Ascending aorta (tissue), 2 donors: ENCODE measurements at regions of chr11 and their contacts with region 1.

Region 1: DNA sequence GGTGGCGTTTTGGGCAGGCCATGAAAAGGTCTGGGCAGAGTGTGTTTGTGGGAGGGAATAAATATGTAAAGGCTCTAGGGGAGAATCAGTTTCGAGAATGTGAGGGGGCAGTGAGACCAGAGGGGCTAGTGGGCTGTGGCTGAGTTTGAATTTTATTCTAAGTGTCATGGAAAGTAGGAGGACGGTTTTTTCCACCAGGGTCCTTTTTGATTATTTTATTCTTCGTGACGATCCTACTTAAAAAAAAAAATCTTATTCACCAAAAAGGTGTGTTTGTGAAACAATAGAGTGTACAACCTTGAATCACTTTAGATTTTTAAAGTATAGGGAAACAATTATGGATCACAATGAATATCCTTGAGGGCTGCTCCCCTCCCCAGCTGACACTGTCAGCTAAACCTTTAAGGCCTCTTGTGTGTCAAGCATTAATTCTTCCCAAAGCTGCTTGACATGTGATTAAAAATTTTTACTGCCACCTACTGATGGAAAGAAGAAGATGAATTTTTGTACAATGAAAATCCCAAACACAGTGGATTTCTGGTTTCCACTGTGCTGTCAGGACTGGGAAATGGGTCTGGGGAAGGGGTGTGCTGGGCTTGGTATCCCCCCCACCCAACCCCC is 107.5 kb upstream of the OR4B1 start:
- DNase-seq: no peak
- H3K4me3 ChIP-seq: peak overlapping the region in 1 of 2 donors; percentile 44
- H3K27ac ChIP-seq: no peak overlapping the region
- H3K4me1 ChIP-seq: peaks cover 4 to 9% of the 10 kb centered on the region in 2 donors
- H3K27me3 ChIP-seq: no peaks in the 10 kb centered on the region
- CTCF ChIP-seq: peak; percentile 27 to 50 (median 48)

Region 2: DNA sequence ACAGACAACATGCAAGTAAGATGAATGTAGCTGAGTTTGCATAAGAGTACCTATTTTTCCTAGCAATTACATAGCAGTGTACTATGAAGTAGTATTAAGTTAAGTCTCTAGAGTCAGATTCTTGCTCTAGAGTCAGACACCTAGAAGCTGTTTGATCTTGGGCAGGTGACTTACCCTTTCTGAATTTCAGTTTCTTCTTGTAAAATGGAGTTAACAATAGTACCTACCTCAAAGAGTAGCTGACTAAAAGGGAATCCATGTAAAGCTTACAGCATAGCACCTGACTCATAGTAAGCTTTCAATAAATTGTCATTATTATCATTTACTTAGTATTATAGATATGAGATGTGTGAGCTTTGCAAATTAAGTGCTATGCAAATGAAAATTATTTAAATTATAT is 176.6 kb before region 1 on chr11:
- intact Hi-C with region 1: loop called (anchors 1 kb)
- DNase-seq: no peak
- H3K4me3 ChIP-seq: no peak overlapping the region
- H3K27ac ChIP-seq: peak overlapping the region in 1 of 2 donors; percentile 56
- H3K4me1 ChIP-seq: no peaks in the 10 kb centered on the region
- H3K27me3 ChIP-seq: no peaks in the 10 kb centered on the region
- CTCF ChIP-seq: no peak

Region 3: DNA sequence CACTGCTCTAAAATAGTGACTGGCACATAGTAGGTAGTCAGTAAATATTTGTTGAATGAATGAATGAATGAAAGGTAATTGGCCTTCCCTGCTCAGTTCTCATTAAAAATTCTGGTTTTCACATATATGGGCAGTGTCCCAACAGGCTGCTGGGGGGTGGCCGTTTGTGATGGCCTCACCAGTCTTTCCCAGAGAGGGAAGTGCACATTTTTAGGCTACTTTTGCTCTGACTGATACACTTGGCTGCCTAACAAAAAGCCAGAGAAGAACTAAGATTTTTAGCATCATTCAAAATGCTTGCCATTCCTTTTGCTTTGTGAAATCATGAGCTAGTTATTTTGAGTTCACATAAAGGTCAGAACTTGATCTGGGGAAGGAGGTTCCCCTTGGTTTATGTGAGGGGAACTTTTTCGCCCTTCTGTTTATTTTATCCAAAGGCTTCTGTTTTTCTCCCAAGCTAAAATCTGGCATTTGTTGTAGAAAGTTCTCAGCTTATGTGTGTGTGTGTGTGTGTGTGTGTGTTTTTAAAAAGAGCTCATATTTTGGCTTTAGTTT is 45.7 kb before region 1 on chr11:
- intact Hi-C with region 1: loop called (anchors 5 kb)
- DNase-seq: peak in 1 of 2 donors; percentile 69
- H3K4me3 ChIP-seq: no peak overlapping the region
- H3K27ac ChIP-seq: peak overlapping the region; percentile 67 to 71
- H3K4me1 ChIP-seq: peaks cover 10 to 20% of the 10 kb centered on the region in 2 donors
- H3K27me3 ChIP-seq: no peaks in the 10 kb centered on the region
- CTCF ChIP-seq: no peak

Region 4: DNA sequence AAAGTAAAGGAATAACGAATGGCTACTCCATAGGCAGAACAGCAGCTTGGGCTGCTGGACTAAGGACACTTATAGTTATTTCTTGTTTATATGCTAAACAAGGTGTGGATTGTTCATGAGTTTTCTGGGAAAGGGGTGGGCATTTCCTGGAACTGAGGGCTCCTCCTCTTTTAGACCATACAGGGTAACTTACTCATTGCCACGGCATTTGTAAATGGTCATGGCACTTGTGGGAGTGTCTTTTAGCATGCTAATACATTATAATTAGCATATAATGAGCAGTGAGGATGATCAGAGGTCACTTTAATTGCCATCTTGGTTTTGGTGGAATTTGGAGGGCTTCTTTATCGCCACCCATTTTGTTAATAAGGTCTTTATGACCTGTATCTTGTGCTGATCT is 161.5 kb after region 1 on chr11:
- intact Hi-C with region 1: no loop called
- DNase-seq: no peak
- H3K4me3 ChIP-seq: no peak overlapping the region
- H3K27ac ChIP-seq: no peak overlapping the region
- H3K4me1 ChIP-seq: no peaks in the 10 kb centered on the region
- H3K27me3 ChIP-seq: no peaks in the 10 kb centered on the region
- CTCF ChIP-seq: no peak